PC-3 (cell line): ENCODE measurements at regions of chr2 and their contacts with region 1.

Region 1: DNA sequence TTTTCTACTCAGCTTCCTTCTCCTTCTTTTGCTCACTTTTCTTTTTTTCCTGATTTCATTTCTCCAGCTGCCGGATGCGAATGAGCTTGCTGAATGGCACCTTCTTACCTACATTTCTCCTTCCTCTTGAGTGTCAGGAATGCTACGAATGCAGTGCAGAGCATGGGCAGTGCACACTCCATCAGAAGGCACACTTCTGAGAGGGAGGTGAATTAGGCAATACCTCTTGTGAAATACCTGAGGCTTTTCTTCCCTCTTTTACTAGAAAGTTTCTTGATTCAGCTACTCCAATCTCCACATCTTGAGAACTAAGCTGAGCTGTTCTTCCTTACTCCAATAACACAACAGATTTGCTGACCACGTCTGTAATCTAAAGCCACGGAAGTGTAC is 51.1 kb downstream of the PLEKHM3 start:
- DNase-seq: no peak
- ATAC-seq: no peak
- H3K4me3 ChIP-seq: no peak overlapping the region
- H3K27ac ChIP-seq: no peak overlapping the region
- H3K4me1 ChIP-seq: no peaks in the 10 kb centered on the region
- H3K27me3 ChIP-seq: no peaks in the 10 kb centered on the region
- CTCF ChIP-seq: no peak

Region 2: GRCh38 chr2:207746131-207746530 is 228.1 kb before region 1 on chr2:
- CTCF ChIA-PET with region 1: no interaction called
- POLR2A ChIA-PET with region 1: interaction called, 10 read pairs
- intact Hi-C with region 1: loop called (anchors 1 kb)
- DNase-seq: peak; percentile 75
- ATAC-seq: peak; percentile 93
- H3K4me3 ChIP-seq: no peak overlapping the region
- H3K27ac ChIP-seq: no peak overlapping the region
- H3K4me1 ChIP-seq: no peaks in the 10 kb centered on the region
- H3K27me3 ChIP-seq: no peaks in the 10 kb centered on the region
- CTCF ChIP-seq: peak; percentile 98

Region 3: DNA sequence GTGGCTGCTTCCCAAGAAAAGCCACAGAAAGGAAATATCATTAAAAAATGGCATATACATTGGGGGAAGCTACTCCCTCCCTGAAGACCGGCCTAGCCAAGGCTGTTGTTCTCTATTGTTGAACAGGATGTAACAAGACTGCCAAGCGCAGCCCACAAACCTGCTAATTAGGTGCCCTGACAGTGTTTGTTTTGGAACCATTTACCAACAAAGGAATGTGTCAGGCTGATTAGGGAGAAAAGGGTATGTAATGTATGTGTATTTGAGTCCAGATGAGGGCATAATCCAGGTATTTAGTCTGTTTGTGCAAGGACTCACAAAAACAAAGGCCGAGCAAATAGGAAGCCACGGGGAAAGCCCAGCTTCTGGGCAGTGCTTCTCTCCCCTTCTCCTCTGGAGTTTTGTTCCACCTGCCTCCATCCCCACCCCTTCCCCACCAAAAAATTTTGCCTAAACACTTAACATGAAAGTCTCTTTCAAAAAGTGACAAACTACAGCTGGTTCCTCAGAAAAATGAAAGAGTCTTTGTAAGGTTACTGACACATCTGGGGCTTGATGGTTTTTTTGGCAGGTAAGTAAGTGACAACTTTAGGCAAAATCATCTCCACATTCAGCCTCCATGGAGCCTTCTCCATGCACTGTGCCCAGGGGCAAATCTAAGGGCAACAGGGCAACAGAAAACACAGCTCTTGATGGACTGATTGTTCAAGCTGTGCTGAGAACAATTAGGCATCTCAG is 126.2 kb before region 1 on chr2:
- CTCF ChIA-PET with region 1: no interaction called
- POLR2A ChIA-PET with region 1: no interaction called
- intact Hi-C with region 1: loop called (anchors 5 kb)
- DNase-seq: peak; percentile 84
- ATAC-seq: peak; percentile 93
- H3K4me3 ChIP-seq: no peak overlapping the region
- H3K27ac ChIP-seq: no peak overlapping the region
- H3K4me1 ChIP-seq: peaks cover 16% of the 10 kb centered on the region
- H3K27me3 ChIP-seq: no peaks in the 10 kb centered on the region
- CTCF ChIP-seq: no peak

Region 4: GRCh38 chr2:208025037-208025813 is 51.0 kb after region 1 on chr2 and contains the start of gene PLEKHM3:
- CTCF ChIA-PET with region 1: no interaction called
- POLR2A ChIA-PET with region 1: no interaction called
- intact Hi-C with region 1: loop called (anchors 5 kb)
- DNase-seq: peak; percentile 84
- ATAC-seq: peak; percentile 97
- H3K4me3 ChIP-seq: peak within 1 kb of the TSS; percentile 91
- H3K27ac ChIP-seq: no peak within 1 kb of the TSS
- H3K4me1 ChIP-seq: peaks cover 5% of the 10 kb centered on the region
- H3K27me3 ChIP-seq: no peaks in the 10 kb centered on the region
- CTCF ChIP-seq: no peak
- total RNA-seq, gene PLEKHM3: 5.9 and 7.9 TPM in 2 replicates

Region 5: DNA sequence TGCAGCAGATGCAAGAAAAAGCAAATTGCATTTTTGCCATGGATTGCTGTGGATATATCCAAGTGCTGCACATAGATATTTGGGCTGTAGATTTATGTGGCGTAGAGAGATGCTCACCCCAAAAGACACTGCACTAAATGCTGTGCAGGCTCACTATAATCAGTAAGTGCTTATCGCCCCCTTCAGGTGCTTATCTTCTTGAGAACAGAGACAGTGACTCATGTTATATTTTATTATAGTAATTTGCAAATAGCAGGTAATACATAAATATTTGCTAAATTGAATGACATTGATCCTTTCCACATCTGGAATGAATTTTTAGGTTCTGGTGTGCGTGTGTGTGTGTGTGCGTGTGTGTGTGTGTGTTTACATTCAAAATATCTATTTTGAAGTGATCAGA is 87.9 kb after region 1 on chr2:
- CTCF ChIA-PET with region 1: no interaction called
- POLR2A ChIA-PET with region 1: no interaction called
- intact Hi-C with region 1: loop called (anchors 5 kb)
- DNase-seq: peak; percentile 61
- ATAC-seq: peak; percentile 40; the same call in 1 of the 2 replicates
- H3K4me3 ChIP-seq: no peak overlapping the region
- H3K27ac ChIP-seq: no peak overlapping the region
- H3K4me1 ChIP-seq: peaks cover 8% of the 10 kb centered on the region; the same call in 1 of the 2 replicates
- H3K27me3 ChIP-seq: no peaks in the 10 kb centered on the region
- CTCF ChIP-seq: peak; percentile 71

Region 6: DNA sequence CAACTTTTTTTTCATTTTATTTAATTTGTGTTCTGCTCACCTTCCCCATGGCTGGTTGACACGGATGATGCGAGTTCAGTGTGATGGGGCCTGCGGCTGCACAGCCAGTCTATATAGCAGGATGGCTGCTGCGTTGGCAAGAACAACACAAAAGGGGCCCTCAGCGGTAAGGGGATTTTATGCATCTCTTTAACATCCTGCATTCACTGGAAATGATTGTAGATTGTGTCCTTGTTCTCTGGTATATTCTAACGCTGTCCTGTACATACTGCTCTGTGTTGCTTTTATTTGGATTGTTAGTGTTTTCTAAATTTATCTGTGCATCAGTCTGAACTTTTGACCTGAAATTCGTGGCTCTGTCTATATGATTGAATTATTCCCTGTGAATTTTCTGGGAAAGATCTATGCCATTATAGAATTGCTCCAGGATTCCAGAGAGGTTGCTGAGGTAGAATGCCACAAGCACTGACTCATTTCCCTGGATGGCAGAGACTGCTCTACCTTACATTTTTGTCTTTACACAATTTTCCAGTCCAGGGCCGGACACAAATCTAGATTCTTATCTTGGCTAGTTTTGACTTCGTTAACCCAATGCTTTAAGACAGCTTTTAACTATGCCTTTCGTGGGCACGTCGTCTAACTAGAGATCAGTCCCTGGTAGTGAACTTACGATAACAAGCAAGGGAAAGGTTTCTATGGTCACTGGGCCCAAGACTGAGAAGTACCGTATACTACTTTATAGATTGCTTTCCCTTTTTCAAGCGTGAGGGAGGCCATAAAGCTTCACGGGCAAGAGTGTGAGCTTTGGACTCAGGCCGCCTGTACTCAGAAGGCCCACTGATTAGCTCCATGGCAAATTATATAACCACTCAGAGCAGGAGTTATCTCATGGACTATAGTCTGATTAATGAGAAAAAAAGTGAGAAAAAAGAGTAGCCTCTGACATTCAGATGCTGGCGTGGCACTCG is 155.8 kb after region 1 on chr2 and contains the start of gene CRYGC:
- CTCF ChIA-PET with region 1: no interaction called
- POLR2A ChIA-PET with region 1: no interaction called
- intact Hi-C with region 1: no loop called
- DNase-seq: peak; percentile 77
- ATAC-seq: peak; percentile 76
- H3K4me3 ChIP-seq: no peak within 1 kb of the TSS
- H3K27ac ChIP-seq: no peak within 1 kb of the TSS
- H3K4me1 ChIP-seq: peaks cover 31% of the 10 kb centered on the region
- H3K27me3 ChIP-seq: no peaks in the 10 kb centered on the region
- CTCF ChIP-seq: no peak
- total RNA-seq, gene CRYGC: not detected in 2 replicates